ENCODE measurements at regions of chr4 and their contacts with region 1.

Region 1: GRCh38 chr4:162406637-162407365 is 243.0 kb upstream of the FSTL5 start:
- DNase-seq: peak; percentile 25 to 33
- H3K4me3 ChIP-seq: no peak overlapping the region
- H3K4me3 Mint-ChIP-seq: peak overlapping the region; percentile 36
- H3K27ac Mint-ChIP-seq: peak overlapping the region; percentile 48
- H3K4me1 ChIP-seq: peaks cover 21% of the 10 kb centered on the region
- H3K4me1 Mint-ChIP-seq: peaks cover 13% of the 10 kb centered on the region
- H3K27me3 ChIP-seq: no peaks in the 10 kb centered on the region
- H3K27me3 Mint-ChIP-seq: no peaks in the 10 kb centered on the region
- CTCF ChIP-seq: no peak

Region 2: GRCh38 chr4:162422312-162422711 is 15.5 kb after region 1 on chr4:
- CTCF ChIA-PET with region 1: no interaction called
- POLR2A ChIA-PET with region 1: no interaction called
- intact Hi-C with region 1: loop called (anchors 2 kb)
- DNase-seq: no peak
- H3K4me3 ChIP-seq: no peak overlapping the region
- H3K4me3 Mint-ChIP-seq: no peak overlapping the region
- H3K27ac Mint-ChIP-seq: no peak overlapping the region
- H3K4me1 ChIP-seq: no peaks in the 10 kb centered on the region
- H3K4me1 Mint-ChIP-seq: peaks cover 6% of the 10 kb centered on the region
- H3K27me3 ChIP-seq: no peaks in the 10 kb centered on the region
- H3K27me3 Mint-ChIP-seq: no peaks in the 10 kb centered on the region
- CTCF ChIP-seq: no peak